ENCODE measurements at regions of chr6 and their contacts with region 1.

Region 1: DNA sequence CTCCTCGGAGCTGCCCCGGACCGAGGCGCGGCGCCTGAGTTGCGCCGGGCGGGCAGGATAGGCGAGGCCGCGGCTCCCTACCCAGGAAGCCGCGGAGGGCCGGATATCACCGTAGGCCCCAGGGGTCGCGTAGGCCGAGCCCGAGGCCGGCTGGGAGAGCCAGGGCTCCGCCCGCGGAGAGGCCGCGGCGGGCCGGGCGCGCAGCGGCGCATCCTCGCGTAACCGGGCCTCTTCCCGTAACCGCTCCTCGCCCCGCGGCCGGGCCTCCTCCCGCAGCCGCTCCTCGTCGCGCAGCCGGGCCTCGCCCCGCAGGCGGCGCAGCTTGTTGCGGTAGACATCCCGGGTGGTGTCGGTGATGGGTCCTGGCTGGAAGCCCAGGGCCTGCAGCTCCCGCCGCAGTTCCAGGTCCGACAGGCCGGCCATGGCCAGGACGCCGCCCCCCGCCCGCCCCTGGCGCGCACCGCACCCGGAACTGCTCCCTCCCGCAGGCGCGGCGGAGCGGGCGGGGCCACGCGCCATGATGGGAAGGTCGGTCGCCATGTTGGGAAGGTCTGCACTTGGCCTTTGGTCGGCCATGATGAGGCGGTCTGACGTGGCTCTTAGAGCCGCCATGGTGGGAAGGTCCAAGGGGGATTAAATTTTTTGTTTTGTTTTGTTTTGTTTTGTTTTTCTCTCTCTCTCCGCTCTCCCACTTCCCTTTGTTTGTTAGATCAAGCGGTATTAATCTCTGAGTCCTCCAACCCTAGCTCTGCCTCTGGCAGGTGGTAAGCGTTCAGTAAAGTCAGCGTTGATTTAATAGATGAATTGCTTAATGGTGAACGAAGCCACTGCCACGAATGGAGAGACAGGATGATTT is at the start of gene LEMD2:
- DNase-seq: peak; percentile 73 to 96
- H3K4me3 ChIP-seq: peak within 1 kb of the TSS; percentile 95
- H3K27ac ChIP-seq: peak within 1 kb of the TSS; percentile 97 to 98
- H3K4me1 ChIP-seq: peaks cover 13 to 29% of the 10 kb centered on the region in 2 donors
- H3K27me3 ChIP-seq: no peaks in the 10 kb centered on the region
- CTCF ChIP-seq: no peak
- total RNA-seq, gene LEMD2: 104 TPM

Region 2: DNA sequence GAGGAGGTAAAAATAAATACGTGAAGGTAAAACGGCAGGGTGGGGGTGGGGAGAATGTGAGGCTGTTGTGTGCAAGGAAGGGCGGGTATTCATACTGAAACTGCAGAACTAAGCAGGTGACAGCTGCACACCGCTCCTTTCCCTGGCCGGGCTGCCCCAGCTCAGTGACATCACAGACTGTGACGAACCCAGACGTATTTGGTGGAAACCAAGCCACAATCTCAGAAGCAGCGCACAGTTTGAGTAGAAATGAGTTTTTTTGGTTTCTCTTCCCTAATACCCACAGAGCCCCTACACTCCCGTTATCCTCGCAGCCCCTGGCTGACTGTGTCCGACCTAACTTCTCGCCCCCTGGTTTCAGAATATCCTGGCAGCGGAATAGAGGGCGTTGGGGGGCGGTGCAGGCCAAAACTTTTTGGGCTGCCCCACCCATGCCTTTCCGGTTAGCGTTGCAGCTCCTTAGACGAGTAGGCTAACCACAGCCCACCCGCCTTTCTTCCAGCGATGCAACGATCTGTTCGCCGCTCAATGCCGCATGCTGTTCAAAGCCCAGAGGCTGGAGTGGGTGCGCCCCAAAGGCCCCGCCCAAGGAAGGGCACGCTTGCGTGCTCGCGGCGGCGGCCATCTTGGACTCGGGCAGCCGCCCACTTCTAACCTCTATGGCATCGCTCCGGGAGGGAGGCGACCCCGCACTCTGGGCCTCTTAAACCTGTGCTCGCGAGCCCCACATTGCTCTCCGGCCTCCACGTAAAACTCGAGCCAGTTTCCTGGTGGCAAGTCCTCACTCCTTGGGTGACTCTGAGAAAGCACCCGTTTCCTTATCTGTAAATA is 217.9 kb before region 1 on chr6:
- intact Hi-C with region 1: no loop called
- DNase-seq: peak; percentile 49 to 91
- H3K4me3 ChIP-seq: peak overlapping the region; percentile 59 to 90
- H3K27ac ChIP-seq: peak overlapping the region; percentile 78 to 92
- H3K4me1 ChIP-seq: peaks cover 4 to 6% of the 10 kb centered on the region in 2 donors
- H3K27me3 ChIP-seq: no peaks in the 10 kb centered on the region
- CTCF ChIP-seq: no peak

Region 3: DNA sequence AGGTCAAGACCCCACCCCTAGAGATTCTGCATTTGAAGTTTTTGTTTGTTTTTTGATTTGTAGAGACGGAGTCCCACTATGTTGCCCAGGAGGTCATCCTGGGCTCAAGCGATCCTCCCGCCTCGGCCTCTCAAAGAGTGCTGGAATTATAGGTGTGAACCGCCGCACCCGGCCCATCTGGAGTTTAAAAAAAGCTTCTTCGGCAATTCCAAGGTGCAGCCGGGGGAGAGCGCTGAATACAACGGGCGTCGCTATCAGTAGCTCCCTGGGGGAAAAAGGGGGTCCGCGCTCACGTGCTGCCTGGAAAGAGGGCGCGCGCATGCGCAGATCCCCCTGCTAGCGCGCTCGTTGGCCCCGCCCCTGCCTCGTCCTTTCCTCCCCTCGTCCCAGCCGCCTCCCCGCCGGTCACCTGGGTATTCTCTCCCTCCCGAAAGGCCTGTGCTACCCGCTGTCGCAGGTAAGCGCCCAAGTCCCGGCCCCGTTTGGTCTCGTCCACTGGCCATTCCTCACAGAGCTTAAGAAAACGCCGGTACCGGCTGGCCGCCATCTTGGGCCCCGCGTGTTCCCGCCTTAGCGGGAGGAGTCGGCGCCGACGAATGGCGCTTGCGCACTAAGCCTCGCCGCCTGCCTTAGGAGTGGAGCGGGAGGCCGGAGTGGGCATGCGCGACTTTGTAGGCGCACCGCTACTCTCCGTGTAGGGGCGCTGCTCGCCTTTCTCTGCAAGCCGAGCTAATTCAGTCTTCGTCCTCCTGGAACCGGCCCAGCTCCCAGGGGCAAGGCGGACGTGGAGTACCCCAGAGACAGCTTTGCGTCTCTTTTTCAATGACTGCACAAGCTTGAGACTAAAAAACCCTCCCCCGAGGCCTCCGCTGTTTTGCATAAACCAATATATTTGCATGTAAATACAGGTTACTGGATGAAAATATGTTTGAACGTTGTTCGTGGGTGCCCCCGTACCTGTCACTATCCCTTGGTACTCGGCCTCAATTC is 77.5 kb before region 1 on chr6 and contains the start of gene UQCC2:
- intact Hi-C with region 1: loop called (anchors 1 kb)
- DNase-seq: peak; percentile 80 to 97
- H3K4me3 ChIP-seq: peak within 1 kb of the TSS; percentile 79 to 86
- H3K27ac ChIP-seq: peak within 1 kb of the TSS; percentile 81 to 93
- H3K4me1 ChIP-seq: peaks cover 6 to 9% of the 10 kb centered on the region in 2 donors
- H3K27me3 ChIP-seq: no peaks in the 10 kb centered on the region
- CTCF ChIP-seq: peak; percentile 52 to 73 (median 59)
- total RNA-seq, gene UQCC2: 2.6 TPM

Measured in ascending aorta (tissue), 2 donors.